ENCODE measurements at regions of chr19 and their contacts with region 1.

Region 1: GRCh38 chr19:2151339-2152229 is at the start of gene AP3D1:
- DNase-seq: peak; percentile 96
- H3K4me3 ChIP-seq: peak within 1 kb of the TSS; percentile 77 to 100 (median 95)
- H3K27ac ChIP-seq: peak within 1 kb of the TSS; percentile 91 to 95 (median 94)
- H3K4me1 ChIP-seq: peaks cover 18 to 78% (median 29%) of the 10 kb centered on the region in 3 donors
- H3K27me3 ChIP-seq: no peaks in the 10 kb centered on the region
- CTCF ChIP-seq: peak in 2 of 6 experiments; percentile 4 to 10
- POLR2A ChIP-seq: peak in 1 of 4 donors; percentile 31
- total RNA-seq, gene AP3D1: 47.7 to 99.9 (median 71.8) TPM

Region 2: DNA sequence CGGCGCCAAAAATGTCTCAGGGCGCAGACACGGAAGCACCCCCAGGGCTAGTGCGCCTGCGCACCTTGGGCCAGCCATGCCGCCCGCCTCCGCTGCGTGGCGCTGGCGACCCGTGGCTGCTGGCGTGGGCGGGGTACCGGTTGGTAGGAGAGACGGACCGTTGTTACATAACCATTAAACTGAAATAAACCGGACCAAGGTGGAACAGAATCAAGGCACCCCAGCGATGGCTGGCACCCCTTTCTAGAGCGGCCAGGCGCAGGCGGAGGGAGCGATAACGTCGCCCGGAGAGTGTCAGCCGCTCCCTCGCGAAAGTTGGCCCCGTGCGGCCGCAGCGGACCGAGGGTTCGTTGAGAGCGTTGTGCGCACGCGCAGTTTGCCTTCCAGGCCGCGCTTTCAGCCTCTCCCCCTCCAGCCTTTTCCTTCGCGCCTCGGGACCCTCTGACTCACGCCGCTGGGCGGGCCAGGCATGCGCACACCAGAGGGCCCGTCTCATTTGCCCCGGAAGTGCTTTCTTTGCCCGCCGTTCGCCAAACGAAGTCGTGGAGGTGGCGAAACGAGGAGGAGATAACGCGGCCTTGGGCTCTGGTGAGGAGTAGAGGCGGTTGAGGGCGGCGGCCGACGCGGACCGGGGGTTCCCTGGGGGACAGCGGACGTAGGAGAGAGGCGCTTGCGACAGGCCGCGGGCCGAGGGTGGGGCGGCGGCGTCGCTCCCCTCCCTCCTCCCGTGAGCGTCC is 84.9 kb after region 1 on chr19 and contains the starts of genes PLEKHJ1 and SF3A2:
- intact Hi-C with region 1: loop called (anchors 10 kb)
- DNase-seq: peak; percentile 73
- H3K4me3 ChIP-seq: peak within 1 kb of the TSS; percentile 79 to 97 (median 86)
- H3K27ac ChIP-seq: peak within 1 kb of the TSS; percentile 96 to 99 (median 98)
- H3K4me1 ChIP-seq: peaks cover 34 to 86% (median 55%) of the 10 kb centered on the region in 3 donors
- H3K27me3 ChIP-seq: no peaks in the 10 kb centered on the region
- CTCF ChIP-seq: peak; percentile 96 to 100 (median 100)
- POLR2A ChIP-seq: peak in 3 of 4 donors; percentile 61 to 81 (median 75)
- total RNA-seq, gene PLEKHJ1: 44.8 to 56.5 (median 48.8) TPM
- total RNA-seq, gene SF3A2: 19.3 to 39.7 (median 31.3) TPM

Region 3: GRCh38 chr19:2391118-2391725 is 239.6 kb after region 1 on chr19:
- intact Hi-C with region 1: loop called (anchors 10 kb)
- DNase-seq: no peak
- H3K4me3 ChIP-seq: no peak overlapping the region
- H3K27ac ChIP-seq: no peak overlapping the region
- H3K4me1 ChIP-seq: no peaks in the 10 kb centered on the region
- H3K27me3 ChIP-seq: peaks cover 0 to 37% (median 0%) of the 10 kb centered on the region in 4 donors
- CTCF ChIP-seq: peak; percentile 46 to 84 (median 74)
- POLR2A ChIP-seq: no peak